HepG2 (cell line): ENCODE measurements at regions of chr2 and their contacts with region 1.

Region 1: DNA sequence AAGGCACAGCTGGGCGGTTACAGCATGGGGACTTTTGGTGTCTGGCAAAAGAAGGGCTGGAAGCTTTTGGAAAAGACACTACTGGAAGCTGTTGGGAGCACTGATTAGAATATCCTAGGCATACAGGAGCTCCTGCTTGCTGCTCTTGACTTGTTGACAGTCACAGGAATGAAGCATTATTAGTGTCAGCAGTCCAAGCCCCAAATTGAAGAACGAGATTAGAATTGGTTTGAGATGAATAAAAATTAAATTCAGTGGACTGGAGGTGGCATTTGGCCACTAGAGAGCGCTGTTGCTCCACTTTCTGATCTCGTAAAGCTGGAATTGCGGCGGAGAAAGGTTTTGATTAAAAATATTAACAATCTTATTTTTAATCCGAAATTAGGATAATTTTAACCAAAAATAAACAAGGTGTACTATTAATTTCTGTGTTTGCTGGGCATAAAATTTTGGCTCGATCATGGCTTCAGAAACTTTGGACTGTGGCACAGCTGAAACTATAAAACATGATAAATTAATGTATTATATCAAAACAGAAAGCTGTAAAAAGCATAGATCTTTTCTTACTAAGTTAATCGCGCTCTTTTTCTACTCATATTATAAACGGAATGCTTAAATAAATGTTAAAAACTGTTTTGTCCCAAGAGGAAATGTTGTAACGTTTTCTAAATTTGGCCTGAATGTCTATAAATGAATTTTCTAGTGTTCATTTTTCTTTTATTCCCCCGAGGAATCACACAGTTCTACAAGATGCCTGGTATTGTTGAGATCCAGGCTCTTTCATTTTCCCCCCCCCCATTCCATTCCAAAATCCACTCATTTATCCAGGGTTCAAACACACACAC is 2.4 kb upstream of the HOXD8 start:
- DNase-seq: peak; percentile 13
- ATAC-seq: no peak
- H3K4me3 ChIP-seq: no peak overlapping the region
- H3K27ac ChIP-seq: no peak overlapping the region
- H3K4me1 ChIP-seq: no peaks in the 10 kb centered on the region
- H3K27me3 ChIP-seq: peaks cover 15 to 81% of the 10 kb centered on the region in 2 experiments
- CTCF ChIP-seq: peak; percentile 79
- EP300 ChIP-seq: no peak
- POLR2A ChIP-seq: no peak
- RAD21 ChIP-seq: peak; percentile 76; the same call in 1 of the 2 replicates

Region 2: GRCh38 chr2:176454893-176455811 is 328.0 kb after region 1 on chr2:
- CTCF ChIA-PET with region 1: interaction called, 14 read pairs
- POLR2A ChIA-PET with region 1: no interaction called
- in situ Hi-C with region 1: no loop called
- intact Hi-C with region 1: no loop called
- DNase-seq: peak; percentile 58
- ATAC-seq: peak; percentile 83
- H3K4me3 ChIP-seq: no peak overlapping the region
- H3K27ac ChIP-seq: no peak overlapping the region
- H3K4me1 ChIP-seq: no peaks in the 10 kb centered on the region
- H3K27me3 ChIP-seq: peaks cover 2 to 4% of the 10 kb centered on the region in 2 experiments; a peak in 1 of 5 replicates
- CTCF ChIP-seq: peak; percentile 83
- EP300 ChIP-seq: no peak
- POLR2A ChIP-seq: no peak
- RAD21 ChIP-seq: peak; percentile 82

Region 3: GRCh38 chr2:176554101-176555048 is 427.2 kb after region 1 on chr2:
- CTCF ChIA-PET with region 1: interaction called, 16 read pairs
- POLR2A ChIA-PET with region 1: no interaction called
- in situ Hi-C with region 1: loop called (anchors 5 kb)
- intact Hi-C with region 1: loop called (anchors 1 kb)
- DNase-seq: peak; percentile 34
- ATAC-seq: peak; percentile 74
- H3K4me3 ChIP-seq: peak overlapping the region; percentile 6 to 39 (median 38)
- H3K27ac ChIP-seq: no peak overlapping the region
- H3K4me1 ChIP-seq: peaks cover 10% of the 10 kb centered on the region
- H3K27me3 ChIP-seq: peaks cover 0 to 19% of the 10 kb centered on the region in 2 experiments; a peak in 3 of 5 replicates
- CTCF ChIP-seq: peak; percentile 86
- EP300 ChIP-seq: no peak
- POLR2A ChIP-seq: no peak
- RAD21 ChIP-seq: 0 out of 2 replicates have a peak, but pooled peaks have one; percentile 28

Region 4: DNA sequence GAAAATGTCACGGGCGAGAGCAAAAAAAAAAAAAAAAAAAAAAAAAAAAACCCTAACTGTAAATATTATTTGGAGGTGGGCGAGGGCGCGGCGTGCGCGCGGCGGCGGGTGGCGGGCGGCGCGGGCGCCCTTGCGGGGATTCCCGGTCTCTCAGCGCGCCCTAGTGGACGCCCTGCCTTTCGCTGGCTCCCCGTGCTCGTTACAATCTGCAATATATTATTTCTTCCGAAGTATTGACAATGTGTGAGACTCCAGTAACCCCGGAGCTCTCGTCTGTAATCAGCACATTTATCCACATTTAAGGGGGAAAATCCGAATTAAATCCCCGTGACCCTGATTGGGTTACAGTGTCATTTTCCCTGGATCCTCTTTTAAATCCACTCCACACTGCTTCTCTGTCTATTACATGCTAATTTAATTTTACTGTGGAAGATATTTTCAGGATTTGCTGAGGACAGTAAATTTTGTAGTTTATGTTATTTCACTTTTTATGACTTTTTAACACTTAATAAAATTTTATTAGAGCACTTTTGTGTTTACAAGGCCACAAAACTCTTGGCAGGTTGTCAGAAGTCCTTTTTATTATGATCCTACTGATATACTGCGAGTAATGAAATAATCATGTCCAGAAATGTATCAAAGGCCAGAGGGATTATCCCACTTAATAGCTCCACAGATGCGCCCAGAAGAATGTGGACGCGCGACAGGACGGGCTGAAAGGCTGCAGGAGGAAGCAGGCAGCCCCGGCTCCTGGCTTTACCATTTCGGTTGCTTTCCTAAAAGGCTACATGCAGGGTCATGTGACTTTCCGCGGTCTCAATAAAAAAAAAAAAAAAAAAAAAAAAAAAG is 511.2 kb after region 1 on chr2:
- CTCF ChIA-PET with region 1: interaction called, 19 read pairs
- POLR2A ChIA-PET with region 1: no interaction called
- in situ Hi-C with region 1: loop called (anchors 5 kb)
- intact Hi-C with region 1: loop called (anchors 1 kb)
- DNase-seq: peak; percentile 15
- ATAC-seq: peak; percentile 97
- H3K4me3 ChIP-seq: peak overlapping the region; percentile 39 to 68 (median 50)
- H3K27ac ChIP-seq: no peak overlapping the region
- H3K4me1 ChIP-seq: peaks cover 11% of the 10 kb centered on the region; the same call in 1 of the 2 replicates
- H3K27me3 ChIP-seq: peaks cover 6 to 59% of the 10 kb centered on the region in 2 experiments
- CTCF ChIP-seq: peak; percentile 75
- EP300 ChIP-seq: no peak
- POLR2A ChIP-seq: no peak
- RAD21 ChIP-seq: peak; percentile 84

Region 5: DNA sequence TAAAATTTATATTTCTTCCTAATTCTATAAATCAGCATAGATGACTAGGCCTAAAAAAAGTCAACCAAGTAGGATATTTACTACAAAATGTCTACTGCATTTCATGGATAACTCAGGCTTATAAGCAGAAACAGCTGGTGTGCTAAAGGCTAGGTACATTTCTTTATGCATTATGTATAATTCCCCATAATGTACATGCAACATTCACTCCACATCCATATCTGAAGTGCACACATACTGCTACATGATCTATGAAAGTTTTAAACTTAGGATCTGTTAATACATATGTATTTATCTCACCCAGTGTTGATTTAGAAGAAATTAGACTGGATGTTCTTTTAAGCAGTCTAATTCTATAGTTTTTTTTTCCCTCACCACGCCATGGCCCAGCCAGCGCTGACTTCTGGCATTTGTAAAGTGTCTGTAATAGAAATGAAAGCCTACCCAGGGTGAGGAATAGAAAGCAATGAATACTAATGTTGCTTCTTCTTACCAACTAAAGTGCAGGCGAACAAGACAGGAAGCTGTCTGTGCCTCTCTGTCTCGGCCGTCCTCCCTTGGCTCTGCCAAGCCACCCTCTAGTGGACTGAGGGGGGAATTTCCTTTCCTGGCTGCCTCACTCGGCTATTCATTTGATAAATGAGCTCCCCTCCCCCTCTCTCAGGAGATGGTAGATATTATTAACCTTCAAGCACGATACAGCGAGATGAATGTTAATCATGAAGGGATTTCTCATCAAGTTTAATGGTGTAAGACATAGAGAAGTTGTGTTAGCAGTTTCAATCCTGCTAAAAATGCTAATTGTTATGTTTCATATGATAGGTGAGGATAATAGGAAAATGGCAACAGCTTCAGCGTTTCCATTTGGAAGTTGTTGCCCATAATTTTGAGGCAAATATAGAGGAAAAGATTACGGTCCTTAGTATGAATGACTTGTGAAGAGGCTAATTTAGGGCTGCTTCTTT is 526.6 kb after region 1 on chr2:
- CTCF ChIA-PET with region 1: interaction called, 44 read pairs
- POLR2A ChIA-PET with region 1: no interaction called
- in situ Hi-C with region 1: no loop called
- intact Hi-C with region 1: loop called (anchors 1 kb)
- DNase-seq: peak; percentile 57
- ATAC-seq: peak; percentile 94
- H3K4me3 ChIP-seq: no peak overlapping the region
- H3K27ac ChIP-seq: no peak overlapping the region
- H3K4me1 ChIP-seq: no peaks in the 10 kb centered on the region
- H3K27me3 ChIP-seq: peaks cover 0 to 15% of the 10 kb centered on the region in 2 experiments; a peak in 2 of 5 replicates
- CTCF ChIP-seq: peak; percentile 52
- EP300 ChIP-seq: no peak
- POLR2A ChIP-seq: no peak
- RAD21 ChIP-seq: 0 out of 2 replicates have a peak, but pooled peaks have one; percentile 22

Region 6: DNA sequence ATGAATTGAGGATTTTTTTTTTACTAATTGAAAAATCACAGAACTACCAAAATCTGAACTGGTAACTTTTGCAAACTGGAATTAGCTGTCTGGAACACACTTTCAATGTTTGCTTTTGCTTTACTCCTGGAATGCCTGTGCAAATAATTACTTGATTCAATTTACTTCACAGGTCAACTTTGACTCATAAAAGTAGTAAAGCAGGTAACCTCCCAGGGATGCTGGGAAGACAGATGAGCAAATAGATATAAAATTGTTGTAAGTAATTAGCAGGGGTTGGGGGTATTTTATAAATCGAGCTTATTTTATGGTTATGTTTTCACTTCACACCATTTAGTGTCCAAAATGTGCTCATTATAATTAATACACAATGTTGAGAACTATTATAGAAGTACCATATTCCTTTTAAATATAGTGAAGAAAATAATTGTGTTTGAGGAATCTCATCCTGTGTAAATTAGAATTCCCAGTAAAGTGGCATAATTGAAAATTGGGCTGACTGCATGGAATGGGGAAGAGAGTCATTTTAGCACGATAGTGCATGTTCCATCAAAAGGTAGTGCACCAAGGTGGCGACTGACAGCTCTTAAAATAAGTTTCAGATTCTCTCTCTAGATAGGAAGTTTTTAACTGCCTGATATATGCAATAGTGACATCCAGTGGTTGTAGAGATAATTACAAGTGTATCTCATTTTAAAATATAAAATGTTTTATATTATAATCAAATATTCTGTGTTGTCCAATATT is 687.3 kb after region 1 on chr2:
- CTCF ChIA-PET with region 1: interaction called, 7 read pairs
- POLR2A ChIA-PET with region 1: no interaction called
- in situ Hi-C with region 1: loop called (anchors 5 kb)
- intact Hi-C with region 1: no loop called
- DNase-seq: peak; percentile 10
- ATAC-seq: peak; percentile 37; the same call in 1 of the 3 replicates
- H3K4me3 ChIP-seq: no peak overlapping the region
- H3K27ac ChIP-seq: no peak overlapping the region
- H3K4me1 ChIP-seq: no peaks in the 10 kb centered on the region
- H3K27me3 ChIP-seq: peaks cover 0 to 15% of the 10 kb centered on the region in 2 experiments; a peak in 2 of 5 replicates
- CTCF ChIP-seq: peak; percentile 50
- EP300 ChIP-seq: no peak
- POLR2A ChIP-seq: no peak
- RAD21 ChIP-seq: no peak